ENCODE measurements at regions of chr12 and their contacts with region 1.

Region 1: GRCh38 chr12:96035278-96036236 is at the start of gene LTA4H:
- DNase-seq: peak; percentile 90 to 99 (median 97)
- ATAC-seq: peak; percentile 92
- H3K4me3 ChIP-seq: peak within 1 kb of the TSS; percentile 65 to 92
- H3K4me3 Mint-ChIP-seq: no peak within 1 kb of the TSS
- H3K27ac ChIP-seq: peak within 1 kb of the TSS; percentile 68 to 78
- H3K27ac Mint-ChIP-seq: no peak within 1 kb of the TSS
- H3K4me1 ChIP-seq: peaks cover 14% of the 10 kb centered on the region
- H3K4me1 Mint-ChIP-seq: peaks cover 12% of the 10 kb centered on the region
- H3K27me3 ChIP-seq: no peaks in the 10 kb centered on the region
- H3K27me3 Mint-ChIP-seq: no peaks in the 10 kb centered on the region
- CTCF ChIP-seq: no peak
- total RNA-seq, gene LTA4H: 38.4 to 42.9 TPM

Region 2: DNA sequence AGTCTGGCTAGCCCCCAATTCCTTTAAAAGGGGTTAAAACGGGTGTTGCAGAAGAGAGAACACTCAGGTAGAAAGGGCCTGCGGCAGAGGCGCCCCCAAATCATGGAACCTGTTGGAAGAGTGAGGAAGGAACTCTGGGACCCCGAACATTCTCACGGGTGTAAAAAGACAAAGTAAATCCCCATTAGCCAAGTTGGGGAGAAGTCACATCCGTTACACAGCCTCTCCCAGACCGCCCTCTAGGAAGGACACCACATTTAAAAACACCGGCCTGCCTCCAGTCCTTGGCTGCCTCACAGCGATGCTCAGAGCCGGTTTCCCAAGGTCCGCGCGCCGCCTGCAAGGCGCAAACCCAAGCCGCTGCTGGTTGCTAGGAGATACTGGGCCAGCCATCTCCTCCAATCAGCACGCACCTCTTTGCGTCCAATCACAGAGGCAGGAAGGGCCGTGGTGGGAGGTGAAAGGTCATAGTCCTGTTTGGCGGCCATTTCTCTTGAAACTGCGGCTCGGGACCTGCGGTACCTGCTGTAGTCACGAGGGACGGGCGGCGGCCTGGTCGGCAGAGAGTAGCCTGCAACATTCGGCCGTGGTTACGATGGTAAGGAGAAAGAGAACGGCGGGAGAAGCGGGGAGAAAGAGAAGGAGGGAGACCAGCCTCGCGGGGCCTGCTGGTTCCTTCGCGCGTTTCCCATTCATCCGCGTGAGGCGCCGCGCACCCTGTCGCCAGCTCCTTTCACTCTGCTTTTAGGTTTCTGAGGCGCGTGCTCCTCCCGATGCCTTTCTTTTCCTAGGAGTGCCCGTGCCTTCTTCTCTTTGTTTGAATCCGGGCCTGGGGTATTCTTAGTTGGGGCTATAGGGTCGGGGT is 176.8 kb before region 1 on chr12 and contains the start of gene SNRPF:
- CTCF ChIA-PET with region 1: no interaction called
- POLR2A ChIA-PET with region 1: no interaction called
- intact Hi-C with region 1: loop called (anchors 1 kb)
- DNase-seq: peak; percentile 88 to 97 (median 92)
- ATAC-seq: peak; percentile 94
- H3K4me3 ChIP-seq: peak within 1 kb of the TSS; percentile 83 to 86
- H3K4me3 Mint-ChIP-seq: no peak within 1 kb of the TSS
- H3K27ac ChIP-seq: peak within 1 kb of the TSS; percentile 79 to 92
- H3K27ac Mint-ChIP-seq: no peak within 1 kb of the TSS
- H3K4me1 ChIP-seq: peaks cover 22% of the 10 kb centered on the region
- H3K4me1 Mint-ChIP-seq: peaks cover 21% of the 10 kb centered on the region
- H3K27me3 ChIP-seq: peaks cover 0 to 2% of the 10 kb centered on the region in 2 experiments
- H3K27me3 Mint-ChIP-seq: peaks cover 3% of the 10 kb centered on the region
- CTCF ChIP-seq: no peak
- total RNA-seq, gene SNRPF: 42.9 to 49.2 TPM

Region 3: GRCh38 chr12:96194971-96195844 is 159.7 kb after region 1 on chr12:
- CTCF ChIA-PET with region 1: no interaction called
- POLR2A ChIA-PET with region 1: interaction called, 4 read pairs
- intact Hi-C with region 1: loop called in 1 of 2 experiments (anchors 5 kb)
- DNase-seq: peak; percentile 37 to 93 (median 73)
- ATAC-seq: peak; percentile 70
- H3K4me3 ChIP-seq: peak overlapping the region; percentile 87 to 95
- H3K4me3 Mint-ChIP-seq: peak overlapping the region; percentile 94
- H3K27ac ChIP-seq: peak overlapping the region; percentile 74 to 77
- H3K27ac Mint-ChIP-seq: peak overlapping the region; percentile 97
- H3K4me1 ChIP-seq: peaks cover 43% of the 10 kb centered on the region
- H3K4me1 Mint-ChIP-seq: peaks cover 64% of the 10 kb centered on the region
- H3K27me3 ChIP-seq: no peaks in the 10 kb centered on the region
- H3K27me3 Mint-ChIP-seq: no peaks in the 10 kb centered on the region
- CTCF ChIP-seq: no peak

Measured in CD8-positive, alpha-beta T cell (primary cell).